ENCODE measurements at regions of chr11 and their contacts with region 1.

Region 1: GRCh38 chr11:69449320-69450063 is 32.0 kb upstream of the LINC01488 start:
- DNase-seq: no peak
- H3K4me3 ChIP-seq: no peak overlapping the region
- H3K27ac ChIP-seq: no peak overlapping the region
- H3K4me1 ChIP-seq: peaks cover 0 to 8% (median 4%) of the 10 kb centered on the region in 4 experiments; a peak in 5 of 7 replicates
- H3K27me3 ChIP-seq: no peaks in the 10 kb centered on the region; a peak in 1 of 7 replicates
- CTCF ChIP-seq: no peak
- EP300 ChIP-seq: no peak
- POLR2A ChIP-seq: no peak
- RAD21 ChIP-seq: no peak

Region 2: GRCh38 chr11:69321877-69322361 is 127.6 kb before region 1 on chr11:
- CTCF ChIA-PET with region 1: no interaction called
- POLR2A ChIA-PET with region 1: no interaction called
- DNase-seq: no peak
- H3K4me3 ChIP-seq: no peak overlapping the region
- H3K27ac ChIP-seq: no peak overlapping the region
- H3K4me1 ChIP-seq: peaks cover 0 to 5% (median 1%) of the 10 kb centered on the region in 4 experiments; a peak in 2 of 7 replicates
- H3K27me3 ChIP-seq: 0 out of 7 replicates have a peak, but pooled peaks cover 0 to 2% (median 0%) of the 10 kb centered on the region in 4 experiments
- CTCF ChIP-seq: no peak
- EP300 ChIP-seq: no peak
- POLR2A ChIP-seq: no peak
- RAD21 ChIP-seq: no peak

Region 3: GRCh38 chr11:69465236-69466000 is 15.9 kb after region 1 on chr11:
- CTCF ChIA-PET with region 1: interaction called, 12 read pairs
- POLR2A ChIA-PET with region 1: no interaction called
- DNase-seq: no peak
- H3K4me3 ChIP-seq: no peak overlapping the region
- H3K27ac ChIP-seq: no peak overlapping the region
- H3K4me1 ChIP-seq: peaks cover 0 to 3% (median 0%) of the 10 kb centered on the region in 4 experiments; a peak in 2 of 7 replicates
- H3K27me3 ChIP-seq: no peaks in the 10 kb centered on the region; a peak in 3 of 7 replicates
- CTCF ChIP-seq: no peak
- EP300 ChIP-seq: no peak
- POLR2A ChIP-seq: no peak
- RAD21 ChIP-seq: no peak